ENCODE measurements at regions of chr1 and their contacts with region 1.

Region 1: DNA sequence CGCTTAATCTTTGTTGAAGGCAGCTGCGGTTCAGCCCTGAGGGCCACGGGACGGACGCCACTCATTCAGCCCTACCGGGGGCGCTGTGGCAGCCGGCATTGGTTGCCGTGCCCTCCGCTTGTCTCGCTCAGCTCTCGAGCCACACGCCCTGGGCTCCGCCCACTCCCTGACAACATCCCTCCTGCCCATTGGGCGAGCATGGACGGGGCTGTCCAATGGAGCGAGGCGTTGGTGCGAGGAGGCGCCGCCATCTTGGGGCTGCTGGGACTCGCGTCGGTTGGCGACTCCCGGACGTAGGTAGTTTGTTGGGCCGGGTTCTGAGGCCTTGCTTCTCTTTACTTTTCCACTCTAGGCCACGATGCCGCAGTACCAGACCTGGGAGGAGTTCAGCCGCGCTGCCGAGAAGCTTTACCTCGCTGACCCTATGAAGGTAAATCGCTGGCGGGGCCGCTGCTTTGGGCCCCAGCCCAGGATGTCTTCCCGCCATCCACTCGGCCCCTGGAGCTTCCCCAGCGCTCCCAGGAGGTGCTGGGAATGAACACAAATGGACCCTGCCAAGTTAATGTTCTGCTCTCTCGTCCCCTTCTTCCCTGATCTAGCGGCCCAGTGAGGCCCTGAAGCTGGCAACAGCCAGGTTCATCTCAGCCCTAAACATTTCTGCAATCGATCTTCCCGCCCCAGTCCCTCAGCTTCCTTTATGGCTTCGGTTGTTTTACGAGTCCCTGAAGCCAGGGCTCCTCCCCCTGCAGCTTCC is at the start of gene SRP9:
- DNase-seq: peak; percentile 94
- ATAC-seq: peak; percentile 97
- H3K4me3 Mint-ChIP-seq: no peak within 1 kb of the TSS
- H3K27ac Mint-ChIP-seq: no peak within 1 kb of the TSS
- H3K4me1 Mint-ChIP-seq: peaks cover 37% of the 10 kb centered on the region
- H3K27me3 Mint-ChIP-seq: no peaks in the 10 kb centered on the region
- CTCF ChIP-seq: no peak
- total RNA-seq, gene SRP9: 141 and 143 TPM in 2 replicates

Region 2: DNA sequence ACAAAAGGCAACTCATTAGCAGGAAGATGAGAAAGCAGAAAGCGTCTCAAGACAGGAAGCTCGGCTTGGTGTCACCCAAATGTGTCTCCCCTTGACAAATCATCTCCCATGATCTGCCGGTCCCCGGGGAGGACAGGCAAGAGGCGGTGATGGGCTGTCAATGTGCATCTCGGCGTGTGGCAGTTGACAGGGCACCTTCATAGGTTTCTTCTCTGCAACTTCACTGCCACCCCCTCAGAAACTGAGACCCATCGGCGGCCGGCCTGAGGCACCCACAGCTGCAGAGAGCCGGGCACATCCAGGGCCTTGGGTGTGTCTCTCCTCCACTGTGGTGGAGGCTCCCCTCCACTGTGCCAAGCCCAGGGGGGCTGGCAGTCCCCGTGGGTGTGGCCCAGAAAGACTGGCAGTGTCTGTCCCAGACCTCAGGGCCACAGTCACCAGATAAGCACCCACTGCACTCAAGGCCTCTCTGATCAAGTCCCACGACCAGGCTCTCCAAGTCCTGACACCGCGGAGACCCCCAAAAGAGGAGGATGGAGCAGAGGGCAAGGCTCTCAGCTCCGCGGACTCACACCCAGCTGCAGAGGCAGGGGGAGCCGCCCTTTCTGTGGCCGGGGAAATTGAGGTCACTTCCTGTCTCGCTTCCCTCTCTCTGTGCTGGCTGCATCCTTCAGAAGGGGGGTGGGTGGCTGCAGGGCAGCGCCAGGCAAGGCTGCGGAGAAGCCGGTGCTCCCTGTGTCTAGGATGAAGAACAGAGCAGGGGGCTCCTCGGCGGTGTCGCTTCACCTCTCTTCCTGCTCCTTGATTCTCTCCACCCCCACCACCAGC is 310.4 kb before region 1 on chr1:
- CTCF ChIA-PET with region 1: no interaction called
- POLR2A ChIA-PET with region 1: interaction called, 24 read pairs
- intact Hi-C with region 1: loop called (anchors 2 kb)
- DNase-seq: peak; percentile 75
- ATAC-seq: peak; percentile 86
- H3K4me3 Mint-ChIP-seq: peak overlapping the region; percentile 90
- H3K27ac Mint-ChIP-seq: peak overlapping the region; percentile 98
- H3K4me1 Mint-ChIP-seq: peaks cover 40% of the 10 kb centered on the region
- H3K27me3 Mint-ChIP-seq: no peaks in the 10 kb centered on the region
- CTCF ChIP-seq: no peak

Region 3: GRCh38 chr1:225763716-225764548 is 13.8 kb before region 1 on chr1:
- CTCF ChIA-PET with region 1: interaction called, 4 read pairs
- POLR2A ChIA-PET with region 1: interaction called, 11 read pairs
- intact Hi-C with region 1: no loop called
- DNase-seq: no peak
- ATAC-seq: no peak
- H3K4me3 Mint-ChIP-seq: no peak overlapping the region
- H3K27ac Mint-ChIP-seq: no peak overlapping the region
- H3K4me1 Mint-ChIP-seq: peaks cover 6% of the 10 kb centered on the region
- H3K27me3 Mint-ChIP-seq: peaks cover 2% of the 10 kb centered on the region
- CTCF ChIP-seq: no peak

Region 4: GRCh38 chr1:225881969-225882693 is 104.4 kb after region 1 on chr1 and contains the start of gene TMEM63A:
- CTCF ChIA-PET with region 1: interaction called, 26 read pairs
- POLR2A ChIA-PET with region 1: interaction called, 50 read pairs
- intact Hi-C with region 1: loop called (anchors 1 kb)
- DNase-seq: peak; percentile 85
- ATAC-seq: peak; percentile 82
- H3K4me3 Mint-ChIP-seq: peak within 1 kb of the TSS; percentile 87
- H3K27ac Mint-ChIP-seq: peak within 1 kb of the TSS; percentile 84
- H3K4me1 Mint-ChIP-seq: peaks cover 49% of the 10 kb centered on the region
- H3K27me3 Mint-ChIP-seq: no peaks in the 10 kb centered on the region
- CTCF ChIP-seq: no peak
- total RNA-seq, gene TMEM63A: 54.8 and 74.5 TPM in 2 replicates

Region 5: DNA sequence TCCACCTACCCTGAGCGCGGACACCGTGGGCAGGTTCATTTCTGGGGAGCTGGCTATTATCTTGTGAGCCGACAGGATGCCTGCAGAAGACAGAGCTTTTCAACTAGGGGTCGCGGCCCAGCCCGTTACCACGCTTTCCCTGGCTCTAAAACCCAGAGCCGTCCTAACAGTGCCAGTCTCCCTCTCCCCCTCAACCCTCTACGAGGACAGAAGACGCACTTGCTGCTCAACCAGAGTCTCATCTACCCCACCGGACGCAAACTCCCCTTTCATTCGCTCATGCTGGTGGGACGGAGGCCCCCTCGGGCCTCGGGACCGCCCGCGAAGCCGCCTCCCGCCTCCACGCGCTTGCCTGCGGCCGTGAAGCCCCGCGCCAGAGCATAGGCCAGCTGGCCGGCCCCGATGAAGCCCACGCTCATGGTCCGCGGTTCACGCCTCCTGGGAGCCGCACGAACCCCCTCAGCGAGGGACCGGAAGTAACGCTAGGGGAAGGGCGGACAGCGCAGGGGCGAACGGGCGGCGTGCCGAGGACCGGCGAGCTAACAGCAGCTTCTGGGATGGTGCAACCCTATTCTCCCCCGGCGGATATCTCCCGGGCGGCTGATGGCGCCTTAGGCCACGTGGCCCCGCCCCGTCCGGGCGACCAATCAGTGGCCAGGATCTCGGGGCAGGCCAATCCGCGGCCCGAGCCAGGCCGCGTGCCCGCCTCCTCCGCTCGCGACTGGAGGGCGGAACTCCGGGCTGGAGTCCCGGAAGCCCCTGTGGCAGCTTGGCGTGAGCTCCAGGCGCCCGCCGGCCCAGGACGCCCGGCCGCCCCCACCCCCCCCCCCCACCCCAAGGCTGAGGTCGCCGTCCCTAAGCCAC is 146.2 kb after region 1 on chr1 and contains the start of gene PYCR2:
- CTCF ChIA-PET with region 1: interaction called, 9 read pairs
- POLR2A ChIA-PET with region 1: interaction called, 32 read pairs
- intact Hi-C with region 1: loop called (anchors 1 kb)
- DNase-seq: peak; percentile 93
- ATAC-seq: peak; percentile 98
- H3K4me3 Mint-ChIP-seq: peak within 1 kb of the TSS; percentile 95
- H3K27ac Mint-ChIP-seq: peak within 1 kb of the TSS; percentile 88
- H3K4me1 Mint-ChIP-seq: peaks cover 20% of the 10 kb centered on the region
- H3K27me3 Mint-ChIP-seq: no peaks in the 10 kb centered on the region
- CTCF ChIP-seq: no peak
- total RNA-seq, gene PYCR2: 109 and 110 TPM in 2 replicates

Measured in activated B cell treated with CpG ODN at 0.5 μM for 24 hours (primary cell).